Aorta (tissue), 5 donors: ENCODE measurements at regions of chr9 and their contacts with region 1.

Region 1: DNA sequence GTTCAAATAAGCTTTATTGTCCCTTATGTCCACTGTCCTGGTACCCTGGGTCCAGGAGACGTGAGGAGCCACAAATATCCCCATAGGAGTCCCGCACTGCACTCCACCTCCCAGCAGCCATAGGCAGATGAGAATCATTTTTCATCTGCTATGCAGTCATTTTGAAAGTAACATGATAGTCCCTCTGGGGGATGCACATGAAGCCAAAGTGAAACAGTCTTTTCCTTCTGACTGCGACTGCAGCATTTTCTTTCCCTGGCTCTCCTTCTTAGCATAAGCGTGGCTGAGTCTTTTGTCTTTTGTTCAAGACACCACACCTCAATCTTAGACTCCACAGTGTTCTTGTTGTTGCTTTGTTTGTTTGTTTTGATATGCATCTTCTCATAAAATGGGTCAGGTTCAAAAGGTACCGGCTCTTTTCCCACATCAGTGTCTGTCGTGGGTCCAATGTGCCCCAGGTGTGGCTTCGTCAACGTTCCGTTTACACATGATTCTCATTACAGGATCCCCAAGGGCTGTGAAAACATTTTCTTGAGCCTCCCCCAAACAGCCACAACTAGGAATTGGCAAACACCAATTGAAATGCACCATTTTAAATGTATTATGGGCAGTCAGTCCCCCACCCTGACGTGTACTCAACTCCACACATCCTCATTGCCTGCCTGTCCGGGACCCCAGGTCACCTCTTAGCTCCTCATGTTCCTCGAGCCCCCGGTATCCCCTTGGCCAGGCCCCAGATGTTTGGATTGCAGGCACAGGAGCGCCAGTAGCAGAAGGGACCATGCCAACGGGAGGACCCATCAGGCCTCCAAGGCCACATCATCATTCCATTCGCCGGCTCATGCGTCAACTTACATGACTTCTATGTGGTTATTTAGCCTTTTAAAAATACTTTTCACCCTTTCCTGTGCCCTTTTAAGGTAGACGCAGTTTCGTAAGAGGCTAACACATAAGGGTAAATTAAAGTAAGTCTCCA is 237.8 kb upstream of the DAPK1 start:
- DNase-seq: no peak
- ATAC-seq: peak; percentile 24
- H3K4me3 ChIP-seq: no peak overlapping the region
- H3K27ac ChIP-seq: no peak overlapping the region
- H3K4me1 ChIP-seq: peaks cover 0 to 3% of the 10 kb centered on the region in 2 donors
- H3K27me3 ChIP-seq: no peaks in the 10 kb centered on the region

Region 2: GRCh38 chr9:87206064-87206661 is 53.7 kb before region 1 on chr9:
- intact Hi-C with region 1: loop called in 1 of 2 experiments (anchors 10 kb)
- DNase-seq: no peak
- ATAC-seq: no peak
- H3K4me3 ChIP-seq: no peak overlapping the region
- H3K27ac ChIP-seq: no peak overlapping the region
- H3K4me1 ChIP-seq: peaks cover 0 to 4% of the 10 kb centered on the region in 2 donors
- H3K27me3 ChIP-seq: no peaks in the 10 kb centered on the region

Region 3: DNA sequence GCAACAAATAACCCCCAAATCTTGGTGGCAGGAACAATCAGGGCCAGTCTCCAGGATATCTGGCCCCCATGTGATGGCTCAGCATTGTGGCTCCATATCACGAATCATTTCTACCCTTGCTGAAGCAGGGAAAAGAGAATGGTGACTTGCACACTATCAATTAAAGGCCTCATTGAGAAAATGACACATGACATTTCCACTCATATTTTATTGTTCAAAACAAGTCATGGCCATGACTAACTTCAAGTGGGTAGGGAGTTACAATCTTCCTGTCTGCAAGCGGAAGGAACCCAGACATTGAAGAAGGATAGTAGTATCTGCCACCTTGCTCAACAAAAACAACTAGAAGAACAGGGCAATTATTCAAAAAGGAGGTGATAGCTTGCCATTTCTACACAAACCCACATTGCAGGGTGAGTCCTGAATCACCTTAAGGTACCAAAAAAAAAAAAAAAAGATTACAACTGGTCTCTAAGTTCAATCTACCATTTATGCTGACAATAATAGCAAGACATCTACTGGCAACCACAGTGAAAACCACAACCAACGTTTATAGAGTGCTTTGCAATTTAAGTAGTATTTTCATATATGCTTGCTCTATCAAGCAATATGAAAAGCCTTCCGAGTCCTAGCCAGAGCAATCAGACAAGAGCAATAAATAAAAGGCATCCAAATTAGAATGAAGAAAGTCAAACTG is 51.1 kb after region 1 on chr9:
- intact Hi-C with region 1: loop called in 1 of 2 experiments (anchors 10 kb)
- DNase-seq: no peak
- ATAC-seq: no peak
- H3K4me3 ChIP-seq: no peak overlapping the region
- H3K27ac ChIP-seq: no peak overlapping the region
- H3K4me1 ChIP-seq: peaks cover 0 to 2% of the 10 kb centered on the region in 2 donors
- H3K27me3 ChIP-seq: no peaks in the 10 kb centered on the region